ENCODE measurements at regions of chr1 and their contacts with region 1.

Region 1: DNA sequence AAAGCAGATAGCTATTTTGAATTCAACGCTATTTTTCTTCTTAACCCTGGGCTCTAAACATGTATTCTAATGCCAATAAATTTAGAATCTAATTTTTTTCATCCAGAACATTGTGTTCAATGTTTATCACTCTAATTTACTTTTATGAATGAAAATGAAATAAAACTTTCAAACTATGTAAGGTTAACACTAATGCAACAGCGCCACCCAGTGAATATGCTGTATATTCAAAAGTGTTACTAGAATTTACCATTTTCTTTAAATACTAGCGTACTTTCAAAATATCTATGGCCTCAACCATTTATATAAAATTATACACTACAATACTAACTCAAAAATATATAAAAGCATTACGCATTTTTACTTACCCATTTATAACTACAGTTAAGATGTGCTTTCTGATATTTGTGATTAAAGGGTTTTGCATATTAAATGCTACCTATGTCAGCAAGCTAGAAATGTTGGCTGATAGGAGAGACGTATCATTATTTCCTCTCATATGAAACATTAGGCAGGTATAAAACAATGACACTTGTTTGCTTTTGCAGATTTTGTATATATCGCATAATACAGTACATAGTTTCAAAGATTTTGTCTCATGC is 5.9 kb upstream of the NUF2 start:
- DNase-seq: no peak
- H3K4me3 ChIP-seq: no peak overlapping the region
- H3K27ac ChIP-seq: no peak overlapping the region
- H3K4me1 ChIP-seq: peaks cover 3 to 6% (median 5%) of the 10 kb centered on the region in 4 donors
- H3K27me3 ChIP-seq: no peaks in the 10 kb centered on the region
- CTCF ChIP-seq: peak; percentile 68 to 77 (median 73)
- EP300 ChIP-seq: no peak
- POLR2A ChIP-seq: no peak

Region 2: GRCh38 chr1:162854245-162854882 is 461.5 kb before region 1 on chr1:
- intact Hi-C with region 1: loop called (anchors 1 kb)
- DNase-seq: no peak
- H3K4me3 ChIP-seq: no peak overlapping the region
- H3K27ac ChIP-seq: no peak overlapping the region
- H3K4me1 ChIP-seq: peaks cover 0 to 5% (median 0%) of the 10 kb centered on the region in 4 donors
- H3K27me3 ChIP-seq: peaks cover 0 to 3% (median 0%) of the 10 kb centered on the region in 4 donors
- CTCF ChIP-seq: peak; percentile 70 to 80 (median 72)
- EP300 ChIP-seq: no peak
- POLR2A ChIP-seq: no peak

Region 3: DNA sequence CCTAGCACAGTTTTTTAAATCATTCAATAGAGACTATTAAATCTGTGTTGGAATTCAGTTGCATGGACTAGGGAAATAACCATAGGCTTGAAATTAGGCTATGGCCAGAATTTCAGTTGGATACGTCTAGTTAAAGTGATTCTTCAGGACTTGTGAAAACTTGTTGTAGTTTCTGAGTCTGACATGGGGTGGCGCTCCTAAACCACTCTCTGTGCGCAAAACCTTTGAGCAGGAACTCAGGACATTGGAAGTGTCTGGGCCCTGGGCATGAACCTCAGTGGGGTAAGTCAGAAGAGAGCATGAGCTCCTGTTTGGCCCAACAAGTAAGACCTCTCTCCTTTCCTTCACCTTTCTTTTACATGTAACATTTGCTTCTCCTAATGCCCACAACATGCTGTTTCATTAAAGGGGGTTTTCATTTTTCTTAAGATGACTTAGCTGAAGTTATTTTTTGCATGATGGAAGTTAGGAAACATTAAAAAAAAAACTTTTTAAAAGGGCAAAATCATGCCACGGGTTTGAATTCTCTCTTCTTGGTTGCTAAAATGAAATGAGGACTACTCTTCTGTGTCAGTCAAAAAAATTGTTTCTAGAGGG is 437.8 kb before region 1 on chr1:
- intact Hi-C with region 1: loop called (anchors 2 kb)
- DNase-seq: no peak
- H3K4me3 ChIP-seq: no peak overlapping the region
- H3K27ac ChIP-seq: no peak overlapping the region
- H3K4me1 ChIP-seq: no peaks in the 10 kb centered on the region
- H3K27me3 ChIP-seq: no peaks in the 10 kb centered on the region
- CTCF ChIP-seq: peak; percentile 64 to 78 (median 70)
- EP300 ChIP-seq: no peak
- POLR2A ChIP-seq: no peak

Region 4: GRCh38 chr1:163071405-163072255 is 244.2 kb before region 1 on chr1:
- intact Hi-C with region 1: loop called (anchors 5 kb)
- DNase-seq: no peak
- H3K4me3 ChIP-seq: peak overlapping the region; percentile 42 to 55 (median 49)
- H3K27ac ChIP-seq: peak overlapping the region; percentile 42 to 55 (median 50)
- H3K4me1 ChIP-seq: peaks cover 0 to 59% (median 48%) of the 10 kb centered on the region in 4 donors
- H3K27me3 ChIP-seq: no peaks in the 10 kb centered on the region
- CTCF ChIP-seq: peak; percentile 62 to 70 (median 63)
- EP300 ChIP-seq: no peak
- POLR2A ChIP-seq: no peak

Region 5: GRCh38 chr1:163774401-163774945 is 458.6 kb after region 1 on chr1:
- intact Hi-C with region 1: no loop called
- DNase-seq: no peak
- H3K4me3 ChIP-seq: no peak overlapping the region
- H3K27ac ChIP-seq: no peak overlapping the region
- H3K4me1 ChIP-seq: no peaks in the 10 kb centered on the region
- H3K27me3 ChIP-seq: no peaks in the 10 kb centered on the region
- CTCF ChIP-seq: no peak
- EP300 ChIP-seq: no peak
- POLR2A ChIP-seq: no peak

Measured in esophagus muscularis mucosa (tissue), 4 donors.